ENCODE measurements at regions of chr3 and their contacts with region 1.

Region 1: DNA sequence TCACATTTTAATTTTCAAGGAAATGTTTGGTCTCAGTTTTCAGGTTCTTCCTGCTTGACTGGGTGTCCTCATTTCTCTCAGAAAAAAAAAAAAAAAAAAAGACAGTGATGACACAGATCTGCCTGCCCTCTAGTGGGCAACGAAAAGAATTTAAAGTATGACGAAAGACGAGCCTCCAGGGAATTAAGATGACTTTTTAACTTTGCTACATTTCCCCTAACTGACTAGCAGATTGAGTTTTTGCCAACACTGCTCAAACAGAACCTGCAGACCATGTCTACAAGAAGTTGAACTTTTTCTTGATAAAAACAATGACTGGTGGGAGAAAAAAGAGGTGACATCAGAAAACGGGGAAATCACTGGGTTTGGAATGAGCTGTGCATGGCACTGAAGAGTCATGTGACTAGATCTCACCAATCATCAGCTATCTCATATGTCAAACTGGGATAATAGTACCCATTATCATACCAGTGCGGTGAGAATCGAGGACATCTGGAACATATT is 40.8 kb downstream of the EOMES start:
- DNase-seq: no peak
- ATAC-seq: peak; percentile 81

Region 2: GRCh38 chr3:27312044-27312668 is 369.1 kb before region 1 on chr3:
- intact Hi-C with region 1: loop called in 1 of 2 experiments (anchors 10 kb)
- DNase-seq: no peak
- ATAC-seq: peak; percentile 74

Region 3: GRCh38 chr3:27479806-27480543 is 201.3 kb before region 1 on chr3:
- intact Hi-C with region 1: loop called in 1 of 2 experiments (anchors 10 kb)
- DNase-seq: no peak
- ATAC-seq: no peak

Region 4: DNA sequence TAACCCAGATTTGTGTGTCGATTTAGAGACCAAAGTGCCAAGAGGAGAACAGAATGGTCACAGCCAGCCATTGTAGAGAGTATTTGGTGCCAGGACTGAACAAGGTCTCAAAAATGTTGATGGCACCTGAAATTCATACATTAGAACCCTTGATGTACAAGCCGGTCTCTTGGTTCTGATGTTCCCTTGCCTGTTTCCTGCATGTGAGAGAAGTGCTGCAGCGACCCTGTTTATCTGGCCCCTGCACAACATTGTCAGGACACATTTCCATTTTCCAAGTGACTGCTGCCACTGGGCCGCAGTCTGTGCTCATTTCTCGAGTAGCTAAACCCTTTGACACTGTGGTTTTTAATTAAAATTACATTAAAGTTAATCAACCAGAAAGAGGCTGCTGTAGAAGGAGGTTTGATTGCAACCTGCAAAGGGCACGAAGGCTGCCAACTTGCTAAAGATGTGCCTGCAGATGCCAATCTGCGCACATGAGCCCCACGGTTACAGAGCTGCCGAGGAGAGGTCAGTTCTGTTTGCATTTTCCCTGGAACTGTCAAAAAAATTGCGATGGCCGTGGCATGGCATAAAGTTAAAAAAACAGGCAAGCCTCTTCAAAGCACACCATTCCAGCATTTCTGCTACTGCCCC is 423.7 kb after region 1 on chr3:
- intact Hi-C with region 1: no loop called
- DNase-seq: no peak
- ATAC-seq: no peak

Measured in left colon (tissue), 2 donors.